ENCODE measurements at regions of chr10 and their contacts with region 1.

Region 1: GRCh38 chr10:79195091-79195923 is 126.5 kb downstream of the ZMIZ1 start:
- DNase-seq: peak; percentile 100
- ATAC-seq: peak; percentile 80
- H3K4me3 ChIP-seq: no peak overlapping the region
- H3K27ac ChIP-seq: no peak overlapping the region
- H3K4me1 ChIP-seq: peaks cover 28% of the 10 kb centered on the region
- H3K27me3 ChIP-seq: no peaks in the 10 kb centered on the region
- CTCF ChIP-seq: peak; percentile 100

Region 2: DNA sequence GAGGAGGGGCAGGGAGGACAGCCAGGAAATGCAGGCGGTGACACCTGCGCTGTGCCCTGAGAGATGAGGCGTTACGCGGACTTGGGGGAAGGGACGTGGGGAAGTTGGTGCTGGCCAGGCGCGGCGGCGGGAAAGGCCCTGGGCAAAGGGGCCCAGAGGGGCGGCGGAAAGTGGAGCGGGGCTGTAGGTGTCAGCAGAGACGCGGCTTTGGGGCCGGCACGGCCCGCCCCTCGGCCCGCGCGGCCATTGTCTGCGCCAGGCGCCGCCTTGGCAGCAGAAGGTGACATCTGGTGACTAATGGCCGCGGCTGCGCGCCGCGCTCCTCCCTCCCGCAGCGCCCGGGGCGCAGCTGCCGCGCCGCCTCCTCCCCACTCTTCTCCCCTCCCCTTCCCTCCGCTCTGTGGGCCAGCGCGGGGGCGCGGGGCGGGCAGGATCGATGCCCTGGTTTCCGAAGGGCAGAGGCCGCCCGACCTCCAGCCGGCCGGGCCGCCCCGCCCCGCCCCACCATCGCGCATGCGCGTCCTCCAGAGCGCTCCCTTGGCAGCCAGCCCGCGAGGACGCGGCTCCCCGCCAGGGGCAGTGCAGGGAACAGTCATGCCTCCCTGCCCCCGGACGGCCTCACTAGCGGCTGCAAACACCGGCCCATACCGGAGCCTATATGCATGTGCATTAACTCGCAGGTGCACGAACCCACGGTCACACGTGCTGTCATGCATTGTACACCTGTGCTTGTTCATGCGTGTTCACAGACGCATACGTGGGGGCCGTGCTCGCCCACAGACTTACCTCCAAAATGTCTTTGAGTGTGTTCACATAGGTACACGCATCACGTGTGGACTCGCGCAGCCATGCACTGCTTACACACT is 892.1 kb before region 1 on chr10:
- CTCF ChIA-PET with region 1: no interaction called
- POLR2A ChIA-PET with region 1: no interaction called
- intact Hi-C with region 1: loop called (anchors 2 kb)
- DNase-seq: peak; percentile 100
- ATAC-seq: peak; percentile 91
- H3K4me3 ChIP-seq: peak overlapping the region; percentile 67
- H3K27ac ChIP-seq: peak overlapping the region; percentile 11
- H3K4me1 ChIP-seq: peaks cover 14% of the 10 kb centered on the region
- H3K27me3 ChIP-seq: peaks cover 36% of the 10 kb centered on the region
- CTCF ChIP-seq: peak; percentile 93

Region 3: DNA sequence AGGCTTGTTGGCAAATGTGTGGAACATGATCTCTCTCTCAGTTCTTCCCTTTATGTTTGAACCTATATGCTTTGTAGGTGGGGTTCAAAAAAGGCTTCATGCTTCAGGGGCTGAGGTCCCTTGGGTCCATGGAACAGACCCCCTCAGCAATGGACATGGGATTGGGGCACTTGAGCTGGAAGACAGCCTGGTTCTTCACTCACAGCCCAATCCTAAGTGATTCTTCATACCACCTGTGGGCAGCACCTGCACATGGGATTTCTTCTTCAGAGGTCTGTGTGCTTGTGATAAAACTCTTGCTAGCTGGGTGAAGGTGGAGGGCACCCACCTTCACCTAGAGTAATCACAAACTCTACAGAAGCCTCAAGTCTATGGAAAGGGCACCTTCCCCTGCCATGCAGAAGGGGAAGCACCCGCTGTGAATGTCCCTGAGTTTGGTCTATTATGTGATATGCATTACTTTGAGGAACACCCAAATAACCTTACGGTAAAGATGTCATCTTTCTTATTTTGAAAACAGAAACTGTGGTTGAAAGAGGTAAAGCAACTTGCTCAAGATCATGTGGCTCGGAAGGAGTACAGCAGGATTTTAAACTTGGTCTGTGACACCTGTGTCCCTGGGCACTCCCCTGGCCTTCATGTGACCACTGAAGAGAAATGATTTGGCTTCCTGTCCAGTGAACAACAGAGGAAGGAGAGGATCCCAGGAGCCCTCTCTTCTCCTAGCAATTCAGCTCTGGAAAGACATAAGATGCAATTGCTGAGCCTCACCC is 596.0 kb before region 1 on chr10:
- CTCF ChIA-PET with region 1: interaction called, 3 read pairs
- POLR2A ChIA-PET with region 1: no interaction called
- intact Hi-C with region 1: loop called (anchors 1 kb)
- DNase-seq: peak; percentile 41
- ATAC-seq: 0 out of 2 replicates have a peak, but pooled peaks have one; percentile 22
- H3K4me3 ChIP-seq: no peak overlapping the region
- H3K27ac ChIP-seq: no peak overlapping the region
- H3K4me1 ChIP-seq: no peaks in the 10 kb centered on the region
- H3K27me3 ChIP-seq: peaks cover 36% of the 10 kb centered on the region
- CTCF ChIP-seq: peak; percentile 56

Region 4: DNA sequence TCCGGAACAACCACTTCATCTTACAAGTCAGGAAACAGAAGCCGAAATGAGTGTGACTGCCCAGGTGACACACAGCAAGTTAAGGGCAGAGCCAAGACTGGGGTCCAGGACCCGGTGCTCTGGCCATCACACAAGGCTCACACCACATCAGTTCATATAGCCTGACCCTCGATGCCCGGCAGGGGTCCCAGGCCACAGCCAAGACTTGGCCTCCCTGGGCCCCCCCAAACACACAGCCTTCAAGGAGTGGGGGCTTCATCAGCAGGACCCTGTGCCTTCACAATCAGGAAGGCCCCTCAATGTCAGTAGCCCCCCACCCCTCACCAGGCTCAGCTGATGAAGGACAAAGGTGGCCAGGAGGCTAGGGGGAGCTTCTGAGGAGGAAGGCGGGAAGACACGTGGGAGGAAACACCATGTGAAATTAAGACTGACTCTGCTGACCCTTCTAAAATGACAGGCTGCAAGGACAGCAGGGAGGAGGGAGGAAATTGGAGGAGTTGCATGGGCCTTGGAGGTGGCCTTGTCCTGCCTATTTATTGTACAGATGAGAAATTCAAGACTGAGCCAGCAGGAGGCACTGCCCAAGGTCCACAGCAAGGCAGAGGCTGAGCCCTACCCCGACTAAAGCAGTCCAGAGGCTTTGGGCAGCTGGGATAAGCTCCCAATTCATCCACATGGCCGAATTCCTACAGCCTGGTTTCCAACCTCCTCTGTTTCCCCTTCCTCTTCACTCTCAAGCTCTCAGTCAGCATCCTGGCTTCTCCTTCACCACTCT is 342.7 kb before region 1 on chr10:
- CTCF ChIA-PET with region 1: interaction called, 3 read pairs
- POLR2A ChIA-PET with region 1: interaction called, 5 read pairs
- intact Hi-C with region 1: loop called (anchors 1 kb)
- DNase-seq: peak; percentile 75
- ATAC-seq: peak; percentile 61
- H3K4me3 ChIP-seq: no peak overlapping the region
- H3K27ac ChIP-seq: no peak overlapping the region
- H3K4me1 ChIP-seq: no peaks in the 10 kb centered on the region
- H3K27me3 ChIP-seq: peaks cover 5% of the 10 kb centered on the region; the same call in 1 of the 2 replicates
- CTCF ChIP-seq: peak; percentile 94

Region 5: GRCh38 chr10:79052291-79053080 is 142.8 kb before region 1 on chr10:
- CTCF ChIA-PET with region 1: interaction called, 7 read pairs
- POLR2A ChIA-PET with region 1: no interaction called
- intact Hi-C with region 1: loop called (anchors 5 kb)
- DNase-seq: peak; percentile 89
- ATAC-seq: peak; percentile 75
- H3K4me3 ChIP-seq: no peak overlapping the region
- H3K27ac ChIP-seq: no peak overlapping the region
- H3K4me1 ChIP-seq: peaks cover 27% of the 10 kb centered on the region
- H3K27me3 ChIP-seq: no peaks in the 10 kb centered on the region
- CTCF ChIP-seq: peak; percentile 91

Region 6: GRCh38 chr10:79084012-79084971 is 111.0 kb before region 1 on chr10:
- CTCF ChIA-PET with region 1: no interaction called
- POLR2A ChIA-PET with region 1: no interaction called
- intact Hi-C with region 1: no loop called
- DNase-seq: peak; percentile 77
- ATAC-seq: peak; percentile 1; the same call in 1 of the 2 replicates
- H3K4me3 ChIP-seq: no peak overlapping the region
- H3K27ac ChIP-seq: no peak overlapping the region
- H3K4me1 ChIP-seq: peaks cover 43% of the 10 kb centered on the region
- H3K27me3 ChIP-seq: no peaks in the 10 kb centered on the region
- CTCF ChIP-seq: no peak

Region 7: DNA sequence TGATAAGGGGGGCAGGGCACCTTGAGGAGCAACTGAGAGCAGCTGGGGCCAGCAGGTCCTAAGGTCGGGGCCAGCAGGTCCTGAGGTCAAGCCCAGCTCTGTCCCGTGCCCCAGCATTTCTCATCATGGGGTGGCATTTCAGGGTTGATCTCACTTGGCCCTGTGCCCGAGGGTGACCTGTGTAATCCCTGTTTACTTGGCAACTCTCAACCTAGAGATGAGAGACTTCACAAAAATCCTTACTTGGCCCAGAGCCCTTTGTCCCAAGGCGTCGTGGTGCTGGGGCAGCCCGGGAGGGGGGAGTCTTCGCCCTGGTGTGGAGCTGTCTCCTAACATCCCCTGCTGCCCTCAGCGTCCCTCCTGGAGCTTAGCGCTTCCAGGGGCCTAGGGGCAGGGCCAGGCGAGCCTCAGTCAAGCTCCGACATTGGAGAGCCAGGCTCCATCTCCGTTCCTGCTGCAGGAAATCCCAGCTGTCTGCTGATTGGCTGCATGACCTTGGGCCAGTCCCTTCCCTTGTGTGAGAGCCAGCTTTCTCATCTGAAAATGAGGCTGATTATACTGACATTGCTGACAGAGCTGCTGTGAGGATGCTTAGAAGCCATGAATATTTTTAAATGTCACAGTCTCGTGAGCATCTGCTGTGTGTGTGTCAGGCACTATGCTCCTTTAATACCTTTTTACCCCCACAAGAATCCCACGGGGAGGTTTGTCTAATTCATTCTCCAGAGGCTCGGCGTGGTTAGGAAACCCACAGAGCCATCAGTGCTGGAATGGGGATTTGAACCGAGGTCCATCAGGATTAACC is 32.2 kb before region 1 on chr10:
- CTCF ChIA-PET with region 1: interaction called, 22 read pairs
- POLR2A ChIA-PET with region 1: no interaction called
- intact Hi-C with region 1: loop called (anchors 1 kb)
- DNase-seq: peak; percentile 100
- ATAC-seq: peak; percentile 51
- H3K4me3 ChIP-seq: no peak overlapping the region
- H3K27ac ChIP-seq: peak overlapping the region; percentile 4; the same call in 1 of the 2 replicates
- H3K4me1 ChIP-seq: peaks cover 39% of the 10 kb centered on the region
- H3K27me3 ChIP-seq: no peaks in the 10 kb centered on the region
- CTCF ChIP-seq: no peak

Measured in PC-3 (cell line).